ENCODE measurements at regions of chr1 and their contacts with region 1.

Region 1: DNA sequence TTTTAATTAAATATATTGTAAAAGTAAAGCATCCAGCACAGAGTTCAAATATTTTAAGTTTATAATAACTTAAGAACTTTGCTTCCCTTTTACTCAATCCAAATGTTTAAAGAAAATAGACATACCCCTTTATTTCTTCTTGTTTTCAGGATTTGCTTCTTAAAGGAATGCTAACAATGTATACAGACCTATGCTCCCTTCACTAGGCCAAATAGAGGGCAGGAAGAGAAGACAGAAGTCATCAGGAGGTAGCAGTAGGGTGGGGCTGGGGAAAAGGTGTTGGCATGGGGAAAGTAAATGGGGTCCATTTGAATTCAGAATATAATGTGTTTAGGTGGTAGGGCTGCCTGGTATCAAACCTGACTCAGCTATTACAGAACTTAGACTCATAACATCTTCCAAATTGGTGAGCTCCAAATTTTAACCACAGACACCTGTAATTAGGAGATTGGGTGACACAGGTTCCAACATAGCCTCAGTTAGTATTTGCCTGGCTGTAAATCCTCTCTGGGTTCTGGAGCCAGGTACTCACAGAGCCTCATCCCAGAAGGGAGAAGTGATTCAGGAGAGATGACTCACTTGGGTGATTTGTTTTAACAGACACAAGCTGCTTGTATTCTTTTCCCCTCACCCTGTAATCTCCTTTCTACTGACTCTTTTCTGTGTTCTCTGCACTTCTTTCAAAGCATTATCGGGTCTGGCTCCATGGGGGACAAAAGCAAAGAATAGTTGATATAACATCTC is 60.1 kb upstream of the DUSP10 start:
- DNase-seq: peak in 1 of 2 experiments; percentile 49
- H3K4me3 ChIP-seq: no peak overlapping the region
- H3K27ac ChIP-seq: peak overlapping the region; percentile 47
- H3K4me1 ChIP-seq: peaks cover 15% of the 10 kb centered on the region
- H3K27me3 ChIP-seq: no peaks in the 10 kb centered on the region
- CTCF ChIP-seq: no peak

Region 2: GRCh38 chr1:221759436-221759835 is 42.5 kb before region 1 on chr1:
- CTCF ChIA-PET with region 1: no interaction called
- POLR2A ChIA-PET with region 1: no interaction called
- intact Hi-C with region 1: loop called (anchors 5 kb)
- DNase-seq: no peak
- H3K4me3 ChIP-seq: no peak overlapping the region
- H3K27ac ChIP-seq: no peak overlapping the region
- H3K4me1 ChIP-seq: no peaks in the 10 kb centered on the region
- H3K27me3 ChIP-seq: no peaks in the 10 kb centered on the region
- CTCF ChIP-seq: no peak

Region 3: DNA sequence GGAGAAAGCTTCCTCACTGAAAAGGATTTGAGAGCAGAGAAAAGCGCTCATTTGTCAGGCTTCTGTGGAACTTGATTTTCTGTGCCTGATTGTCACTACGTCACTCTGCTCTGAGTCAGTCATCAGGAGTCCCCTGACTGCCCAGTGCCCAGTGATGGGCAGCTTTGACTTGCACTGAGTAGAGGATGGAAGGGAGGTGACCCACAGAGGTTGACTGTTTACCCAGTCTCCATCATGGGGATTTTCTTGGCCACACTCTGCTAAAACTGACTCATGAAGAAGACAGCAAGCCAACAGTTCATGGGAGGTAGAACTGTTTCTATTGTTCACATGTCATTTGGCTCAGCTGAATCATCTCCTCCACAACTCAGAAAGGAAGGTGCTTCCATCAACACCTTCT is 22.1 kb after region 1 on chr1:
- CTCF ChIA-PET with region 1: no interaction called
- POLR2A ChIA-PET with region 1: interaction called, 10 read pairs
- intact Hi-C with region 1: no loop called
- DNase-seq: peak; percentile 52 to 70
- H3K4me3 ChIP-seq: no peak overlapping the region
- H3K27ac ChIP-seq: peak overlapping the region; percentile 29; the same call in 1 of the 2 replicates
- H3K4me1 ChIP-seq: peaks cover 29% of the 10 kb centered on the region
- H3K27me3 ChIP-seq: no peaks in the 10 kb centered on the region
- CTCF ChIP-seq: no peak

Measured in PC-9 (cell line).